Naive thymus-derived CD4-positive, alpha-beta T cell (primary cell): ENCODE measurements at regions of chr1 and their contacts with region 1.

Region 1: GRCh38 chr1:206075786-206076755 is 23.1 kb downstream of the RHEX start:
- DNase-seq: no peak
- ATAC-seq: no peak
- H3K4me3 ChIP-seq: no peak overlapping the region
- H3K4me3 Mint-ChIP-seq: no peak overlapping the region
- H3K27ac ChIP-seq: no peak overlapping the region
- H3K27ac Mint-ChIP-seq: no peak overlapping the region
- H3K4me1 ChIP-seq: peaks cover 11% of the 10 kb centered on the region in 2 donors
- H3K4me1 Mint-ChIP-seq: peaks cover 13 to 17% (median 16%) of the 10 kb centered on the region in 7 donors
- H3K27me3 ChIP-seq: no peaks in the 10 kb centered on the region
- H3K27me3 Mint-ChIP-seq: peaks cover 0 to 56% (median 0%) of the 10 kb centered on the region in 5 donors

Region 2: DNA sequence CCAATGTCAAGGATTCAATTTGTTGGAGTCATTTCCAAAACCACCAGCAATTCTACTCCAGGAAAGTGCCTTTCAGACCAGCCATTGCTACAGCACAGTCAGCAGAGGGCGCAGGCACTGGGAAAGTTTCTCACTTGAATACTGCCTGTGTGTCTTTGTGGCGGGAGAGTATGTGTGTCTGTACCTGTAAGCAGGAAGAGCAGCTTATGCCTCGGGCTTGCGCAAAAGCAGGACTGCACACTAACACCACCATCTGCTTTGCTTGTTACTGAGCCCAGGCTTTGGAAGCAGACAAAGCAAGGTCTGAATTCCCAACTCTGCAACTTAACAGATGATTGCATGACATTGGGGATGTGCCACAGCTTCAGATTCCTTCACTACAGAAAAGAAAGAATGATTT is 45.4 kb before region 1 on chr1:
- CTCF ChIA-PET with region 1: interaction called, 6 read pairs
- POLR2A ChIA-PET with region 1: no interaction called
- intact Hi-C with region 1: loop called in 1 of 2 experiments (anchors 5 kb)
- DNase-seq: peak; percentile 33 to 69 (median 58)
- ATAC-seq: peak; percentile 86
- H3K4me3 ChIP-seq: no peak overlapping the region
- H3K4me3 Mint-ChIP-seq: peak overlapping the region in 1 of 10 donors; percentile 6
- H3K27ac ChIP-seq: no peak overlapping the region
- H3K27ac Mint-ChIP-seq: peak overlapping the region in 1 of 9 donors; percentile 58
- H3K4me1 ChIP-seq: peaks cover 0 to 4% of the 10 kb centered on the region in 2 donors
- H3K4me1 Mint-ChIP-seq: peaks cover 0 to 12% (median 11%) of the 10 kb centered on the region in 7 donors
- H3K27me3 ChIP-seq: peaks cover 0 to 2% of the 10 kb centered on the region in 2 donors
- H3K27me3 Mint-ChIP-seq: peaks cover 0 to 72% (median 9%) of the 10 kb centered on the region in 5 donors